ENCODE measurements at regions of chr2 and their contacts with region 1.

Region 1: GRCh38 chr2:84314901-84315330 is 144.2 kb downstream of the SUCLG1 start:
- DNase-seq: peak; percentile 41
- CTCF ChIP-seq: peak; percentile 92

Region 2: DNA sequence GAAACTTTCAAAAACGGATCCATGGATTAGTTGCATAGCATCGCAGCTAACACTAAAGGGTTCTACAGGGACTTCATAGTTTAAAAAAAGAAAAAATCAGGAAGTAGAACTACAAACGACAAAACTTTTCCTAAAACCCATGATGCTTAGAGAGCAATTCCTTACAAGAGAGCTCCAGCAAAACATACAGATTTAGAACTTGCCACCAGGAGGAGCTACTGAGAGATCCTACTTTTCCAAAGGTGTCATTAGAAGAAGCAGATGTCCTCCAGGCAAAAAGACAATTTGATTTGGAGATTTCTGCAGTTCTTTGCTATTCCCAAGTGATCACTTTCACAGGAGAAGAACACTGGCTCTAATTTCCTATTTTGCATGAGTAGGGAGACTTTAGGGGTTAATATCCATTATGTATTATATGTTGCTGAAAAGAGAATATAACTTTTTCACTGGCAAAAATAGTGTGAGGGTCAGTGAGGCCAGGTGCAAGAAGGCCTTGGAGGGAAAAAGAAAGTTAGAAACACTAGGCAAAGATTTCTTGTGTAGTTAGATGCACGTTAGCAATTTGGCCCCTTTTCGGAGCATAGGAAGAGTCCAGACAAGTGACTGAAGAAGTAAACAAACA is 292.0 kb before region 1 on chr2:
- in situ Hi-C with region 1: loop called (anchors 25 kb)
- DNase-seq: peak; percentile 17
- CTCF ChIP-seq: peak; percentile 61

Measured in GM13977 (cell line).